ENCODE measurements at regions of chr15 and their contacts with region 1.

Region 1: DNA sequence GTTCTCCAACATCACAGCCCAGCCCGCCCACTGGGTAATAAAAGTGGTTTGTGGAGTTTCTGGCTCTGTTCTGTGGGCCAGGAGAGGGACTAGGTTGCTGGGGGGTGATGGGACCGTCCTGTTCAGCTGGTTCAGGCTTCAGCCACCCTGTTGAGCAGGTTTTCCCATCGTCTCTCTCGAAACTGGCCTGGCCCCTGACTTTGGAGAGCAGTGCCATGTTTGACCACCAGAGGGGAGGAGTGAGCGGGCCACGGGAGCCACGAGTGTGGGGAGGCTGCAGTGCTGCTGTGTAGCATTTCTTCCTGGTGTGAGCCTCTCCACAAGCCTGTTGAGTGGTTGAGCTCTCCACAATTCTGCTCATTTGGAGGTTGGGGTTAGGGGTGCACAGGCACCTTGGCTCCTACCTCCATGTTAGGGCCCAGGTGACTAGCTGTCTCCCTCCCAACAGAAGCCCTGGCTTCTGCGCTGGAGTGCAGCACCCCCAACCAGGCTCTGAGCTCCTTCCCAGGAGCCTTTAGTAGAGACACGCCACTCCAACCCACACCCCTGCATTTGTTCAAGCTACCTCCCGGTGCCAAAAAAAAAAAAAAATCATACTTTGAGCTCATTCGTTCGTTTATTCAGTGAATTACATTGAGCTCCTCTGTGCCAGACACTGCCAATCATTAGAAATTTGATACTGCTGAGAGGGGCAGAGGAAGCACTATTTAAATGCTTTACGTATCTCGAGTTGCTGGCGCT is 13.9 kb downstream of the SPINT1 start:
- H3K4me3 ChIP-seq: no peak overlapping the region
- H3K27ac ChIP-seq: no peak overlapping the region
- H3K4me1 ChIP-seq: no peaks in the 10 kb centered on the region
- CTCF ChIP-seq: peak; percentile 86

Region 2: DNA sequence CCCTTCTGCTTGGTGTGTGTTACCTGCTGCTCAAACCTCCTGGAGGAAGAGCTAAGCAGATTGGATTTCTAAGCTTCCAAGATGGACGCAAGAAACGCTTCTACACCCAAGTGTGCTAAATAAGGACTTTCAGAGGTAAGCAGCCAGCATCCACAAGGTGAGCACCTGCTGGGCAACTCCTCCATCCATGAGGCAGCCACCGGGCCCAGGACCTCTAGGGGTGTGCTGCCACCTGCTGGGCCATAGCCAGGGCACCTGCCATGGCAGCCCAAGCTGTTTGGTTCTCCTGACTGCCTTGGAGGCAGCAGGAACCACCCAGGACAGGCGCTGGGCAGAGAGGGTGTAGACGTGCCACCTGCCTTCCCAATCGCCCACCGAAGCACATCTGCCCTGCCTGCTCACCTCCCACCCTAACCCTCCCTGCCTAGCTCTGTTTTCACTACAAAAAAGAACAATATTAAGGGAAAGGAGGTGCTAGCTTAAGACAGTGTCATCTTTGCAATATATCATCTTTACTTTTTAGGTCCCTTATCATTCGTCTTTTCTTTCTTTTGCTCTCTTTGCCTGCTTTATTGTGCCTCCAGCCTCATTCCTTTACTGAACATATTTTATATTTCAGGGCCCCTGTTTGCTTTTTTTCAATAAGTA is 75.1 kb before region 1 on chr15:
- CTCF ChIA-PET with region 1: interaction called, 19 read pairs
- POLR2A ChIA-PET with region 1: no interaction called
- H3K4me3 ChIP-seq: no peak overlapping the region
- H3K27ac ChIP-seq: no peak overlapping the region
- H3K4me1 ChIP-seq: peaks cover 6% of the 10 kb centered on the region
- CTCF ChIP-seq: peak; percentile 87

Region 3: GRCh38 chr15:40847205-40847961 is 10.4 kb before region 1 on chr15:
- CTCF ChIA-PET with region 1: interaction called, 63 read pairs
- POLR2A ChIA-PET with region 1: interaction called, 6 read pairs
- H3K4me3 ChIP-seq: no peak overlapping the region
- H3K27ac ChIP-seq: no peak overlapping the region
- H3K4me1 ChIP-seq: peaks cover 3% of the 10 kb centered on the region; the same call in 1 of the 2 replicates
- CTCF ChIP-seq: no peak

Region 4: GRCh38 chr15:40873625-40874561 is 16.1 kb after region 1 on chr15 and contains the start of gene RHOV:
- CTCF ChIA-PET with region 1: no interaction called
- POLR2A ChIA-PET with region 1: interaction called, 49 read pairs
- H3K4me3 ChIP-seq: peak within 1 kb of the TSS; percentile 67
- H3K27ac ChIP-seq: peak within 1 kb of the TSS; percentile 69; the same call in 1 of the 2 replicates
- H3K4me1 ChIP-seq: 0 out of 2 replicates have a peak, but pooled peaks cover 2% of the 10 kb centered on the region
- CTCF ChIP-seq: peak; percentile 83

Region 5: GRCh38 chr15:40893733-40894688 is 36.2 kb after region 1 on chr15 and contains the start of gene VPS18:
- CTCF ChIA-PET with region 1: interaction called, 187 read pairs
- POLR2A ChIA-PET with region 1: interaction called, 47 read pairs
- H3K4me3 ChIP-seq: peak within 1 kb of the TSS; percentile 79
- H3K27ac ChIP-seq: peak within 1 kb of the TSS; percentile 41; the same call in 1 of the 2 replicates
- H3K4me1 ChIP-seq: no peaks in the 10 kb centered on the region
- CTCF ChIP-seq: peak; percentile 81

Region 6: GRCh38 chr15:40906091-40906990 is 48.6 kb after region 1 on chr15:
- CTCF ChIA-PET with region 1: interaction called, 19 read pairs
- POLR2A ChIA-PET with region 1: no interaction called
- H3K4me3 ChIP-seq: peak overlapping the region; percentile 30
- H3K27ac ChIP-seq: 0 out of 2 replicates have a peak overlapping the region, but pooled peaks have one; percentile 37
- H3K4me1 ChIP-seq: peaks cover 2% of the 10 kb centered on the region; the same call in 1 of the 2 replicates
- CTCF ChIP-seq: peak; percentile 88

Region 7: GRCh38 chr15:41066516-41066915 is 208.7 kb after region 1 on chr15:
- CTCF ChIA-PET with region 1: no interaction called
- POLR2A ChIA-PET with region 1: no interaction called
- H3K4me3 ChIP-seq: no peak overlapping the region
- H3K27ac ChIP-seq: no peak overlapping the region
- H3K4me1 ChIP-seq: no peaks in the 10 kb centered on the region
- CTCF ChIP-seq: no peak